Mammary epithelial cell (primary cell): ENCODE measurements at regions of chr10 and their contacts with region 1.

Region 1: GRCh38 chr10:2358586-2358985 is 621.3 kb upstream of the ADARB2 start:
- DNase-seq: no peak
- H3K4me3 ChIP-seq: no peak overlapping the region
- H3K27ac ChIP-seq: no peak overlapping the region
- H3K4me1 ChIP-seq: no peaks in the 10 kb centered on the region
- H3K27me3 ChIP-seq: no peaks in the 10 kb centered on the region
- CTCF ChIP-seq: no peak

Region 2: GRCh38 chr10:1989090-1989489 is 369.5 kb before region 1 on chr10:
- CTCF ChIA-PET with region 1: no interaction called
- dilution Hi-C with region 1: no loop called
- in situ Hi-C with region 1: no loop called
- intact Hi-C with region 1: loop called (anchors 5 kb)
- DNase-seq: no peak
- H3K4me3 ChIP-seq: no peak overlapping the region
- H3K27ac ChIP-seq: no peak overlapping the region
- H3K4me1 ChIP-seq: no peaks in the 10 kb centered on the region
- H3K27me3 ChIP-seq: no peaks in the 10 kb centered on the region
- CTCF ChIP-seq: no peak

Region 3: DNA sequence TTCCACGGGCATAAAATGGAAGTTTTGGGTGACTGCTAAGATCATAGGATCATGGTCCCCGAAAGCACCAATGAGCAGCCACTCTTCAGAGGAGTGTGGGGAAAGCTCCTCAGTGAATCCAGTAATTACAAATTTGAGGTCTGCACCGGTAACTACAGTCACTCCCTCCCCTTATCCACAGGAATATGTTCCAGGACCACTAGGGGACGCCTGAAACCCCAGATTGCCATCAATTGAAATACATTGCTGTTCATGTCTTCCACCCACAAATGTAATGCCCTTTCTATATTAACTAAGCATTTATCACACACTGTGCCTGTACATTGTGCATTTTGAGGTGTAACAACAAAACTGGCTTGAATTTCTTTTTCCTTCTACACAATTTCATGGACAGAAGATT is 260.9 kb after region 1 on chr10:
- CTCF ChIA-PET with region 1: no interaction called
- dilution Hi-C with region 1: no loop called
- in situ Hi-C with region 1: no loop called
- intact Hi-C with region 1: no loop called
- DNase-seq: no peak
- H3K4me3 ChIP-seq: no peak overlapping the region
- H3K27ac ChIP-seq: no peak overlapping the region
- H3K4me1 ChIP-seq: no peaks in the 10 kb centered on the region
- H3K27me3 ChIP-seq: no peaks in the 10 kb centered on the region
- CTCF ChIP-seq: peak in 1 of 2 donors; percentile 11